GM12878 (cell line): ENCODE measurements at regions of chr1 and their contacts with region 1.

Region 1: DNA sequence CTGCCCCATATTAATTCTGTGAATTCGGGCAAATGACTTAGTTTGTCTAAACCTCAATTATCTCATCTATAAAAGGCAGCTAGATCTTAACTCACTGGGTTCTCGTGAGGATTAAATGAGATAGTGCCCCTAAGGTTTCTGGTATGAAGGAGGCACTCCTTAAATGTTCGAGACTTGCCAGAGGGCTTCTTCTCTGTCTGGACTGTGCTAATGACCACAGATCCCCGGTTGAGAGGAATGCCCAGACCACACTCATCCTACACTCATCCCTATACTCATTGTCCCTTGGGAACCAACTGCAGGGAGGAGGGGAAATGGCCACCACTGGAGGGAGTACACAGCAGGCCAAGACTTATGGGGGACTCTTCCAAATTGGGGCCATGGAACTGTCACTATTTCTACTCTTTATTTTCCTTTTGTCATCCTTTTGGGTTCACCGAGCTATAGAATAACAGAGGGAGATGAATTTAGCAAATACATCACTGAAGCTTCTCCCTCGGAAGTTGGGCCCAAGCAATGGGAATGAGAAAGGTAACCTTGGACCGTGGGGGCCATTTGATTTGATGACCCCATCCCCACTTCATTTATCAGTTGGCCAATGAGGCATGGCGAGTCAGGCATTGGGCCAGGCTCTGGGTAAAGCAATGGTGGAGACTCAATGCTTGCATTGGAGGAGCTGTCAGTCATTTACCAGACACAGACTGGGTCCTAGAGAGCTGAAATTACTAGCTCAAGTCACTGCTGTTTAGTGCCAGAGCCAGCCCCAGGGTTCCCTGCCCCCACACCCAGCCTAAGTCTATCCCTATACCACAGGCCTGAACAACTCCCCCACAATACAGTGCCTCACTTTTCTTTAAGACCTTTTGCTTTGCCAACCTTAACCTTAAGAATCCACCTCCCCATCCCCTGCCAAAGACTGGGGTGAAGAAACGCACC is 5.2 kb downstream of the ATF3 start:
- DNase-seq: no peak
- ATAC-seq: peak; percentile 8
- H3K4me3 ChIP-seq: peak overlapping the region; percentile 65; the same call in 1 of the 2 replicates
- H3K27ac ChIP-seq: peak overlapping the region; percentile 66
- H3K4me1 ChIP-seq: peaks cover 27% of the 10 kb centered on the region
- H3K27me3 ChIP-seq: no peaks in the 10 kb centered on the region
- CTCF ChIP-seq: no peak
- EP300 ChIP-seq: no peak
- POLR2A ChIP-seq: no peak
- RAD21 ChIP-seq: no peak

Region 2: DNA sequence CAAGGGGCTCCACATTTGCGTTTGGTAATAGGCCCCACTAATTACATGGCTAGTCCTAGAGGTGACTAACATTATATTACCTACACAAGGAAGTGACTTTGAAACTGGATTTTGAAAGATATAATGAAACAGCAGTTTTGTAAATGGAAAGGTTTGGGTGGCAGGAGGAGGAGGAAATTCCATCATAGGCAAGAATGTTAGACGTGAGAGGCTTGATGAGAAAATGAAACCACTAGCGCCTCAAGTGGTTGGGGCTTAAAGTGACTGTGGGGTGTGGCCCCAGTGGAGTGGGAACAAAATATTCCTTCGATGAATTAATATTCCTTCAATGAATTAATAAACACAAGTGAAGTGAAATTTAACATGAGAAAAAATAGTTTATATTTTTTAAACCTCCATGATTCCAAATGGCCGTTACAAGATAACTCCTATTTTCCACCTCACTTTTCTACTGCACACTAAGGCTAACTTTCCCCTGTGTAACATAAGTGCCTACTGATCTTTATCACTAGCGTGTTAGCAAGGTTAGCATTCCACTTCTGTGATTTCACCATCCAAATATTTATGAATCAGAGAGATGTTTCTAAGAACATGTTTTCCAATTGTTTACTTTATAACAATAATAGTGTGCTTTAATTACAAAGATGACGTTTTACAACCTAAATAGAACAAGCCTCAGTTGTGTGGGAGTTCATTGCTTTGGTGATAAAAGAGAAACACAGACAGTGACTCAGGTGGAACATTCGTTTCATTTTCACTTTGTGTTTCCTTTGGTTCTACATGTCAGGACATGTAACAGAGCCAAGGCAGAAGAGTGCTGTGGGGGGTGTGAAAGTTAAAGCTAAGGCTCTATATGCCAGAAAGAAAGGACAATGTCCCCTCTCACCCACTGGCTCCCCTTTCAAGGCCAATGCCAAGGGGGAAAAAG is 17.7 kb before region 1 on chr1:
- CTCF ChIA-PET with region 1: interaction called, 8 read pairs
- POLR2A ChIA-PET with region 1: interaction called, 48 read pairs
- RAD21 ChIA-PET with region 1: interaction called, 30 read pairs
- SMC1A ChIA-PET with region 1: interaction called, 29 read pairs
- in situ Hi-C with region 1: no loop called
- intact Hi-C with region 1: loop called (anchors 1 kb)
- DNase-seq: peak; percentile 90
- ATAC-seq: peak; percentile 93
- H3K4me3 ChIP-seq: no peak overlapping the region
- H3K27ac ChIP-seq: peak overlapping the region; percentile 95
- H3K4me1 ChIP-seq: peaks cover 17% of the 10 kb centered on the region
- H3K27me3 ChIP-seq: no peaks in the 10 kb centered on the region
- CTCF ChIP-seq: peak; percentile 51 to 62 (median 61); a peak in 5 of 6 replicates
- EP300 ChIP-seq: peak; percentile 76 to 94
- POLR2A ChIP-seq: peak; percentile 39; the same call in 1 of the 2 replicates
- RAD21 ChIP-seq: peak; percentile 38

Region 3: GRCh38 chr1:212630158-212630900 is 16.6 kb after region 1 on chr1:
- CTCF ChIA-PET with region 1: interaction called, 25 read pairs
- POLR2A ChIA-PET with region 1: interaction called, 4 read pairs
- RAD21 ChIA-PET with region 1: interaction called, 5 read pairs
- SMC1A ChIA-PET with region 1: interaction called, 5 read pairs
- in situ Hi-C with region 1: no loop called
- intact Hi-C with region 1: loop called (anchors 2 kb)
- DNase-seq: no peak
- ATAC-seq: peak; percentile 99
- H3K4me3 ChIP-seq: no peak overlapping the region
- H3K27ac ChIP-seq: no peak overlapping the region
- H3K4me1 ChIP-seq: peaks cover 16% of the 10 kb centered on the region
- H3K27me3 ChIP-seq: no peaks in the 10 kb centered on the region
- CTCF ChIP-seq: peak; percentile 82 to 99 (median 97)
- EP300 ChIP-seq: no peak
- POLR2A ChIP-seq: no peak
- RAD21 ChIP-seq: peak; percentile 81